BJ (cell line): ENCODE measurements at regions of chr18 and their contacts with region 1.

Region 1: DNA sequence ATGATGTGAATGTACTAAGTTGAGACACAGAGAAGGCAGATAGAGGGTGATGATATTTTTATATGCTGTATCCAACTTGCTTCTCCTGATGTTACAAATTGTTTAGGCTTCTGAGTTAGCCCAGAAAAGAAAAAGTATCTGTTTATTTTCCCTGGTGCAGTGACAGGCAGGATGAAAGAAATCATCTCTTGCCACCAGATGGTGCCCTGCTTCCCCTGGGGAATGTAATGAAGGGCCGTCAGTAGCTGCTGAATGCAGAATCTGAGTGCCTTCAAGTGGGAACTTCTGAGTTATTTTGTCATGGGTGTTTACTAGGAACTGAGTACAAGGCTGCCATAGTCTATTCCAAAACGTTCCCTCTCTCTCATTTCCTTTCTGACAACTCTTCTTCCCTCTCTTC is 525.6 kb downstream of the MBD2 start:
- DNase-seq: no peak
- H3K4me3 ChIP-seq: no peak overlapping the region
- H3K27me3 ChIP-seq: no peaks in the 10 kb centered on the region
- CTCF ChIP-seq: peak; percentile 63

Region 2: DNA sequence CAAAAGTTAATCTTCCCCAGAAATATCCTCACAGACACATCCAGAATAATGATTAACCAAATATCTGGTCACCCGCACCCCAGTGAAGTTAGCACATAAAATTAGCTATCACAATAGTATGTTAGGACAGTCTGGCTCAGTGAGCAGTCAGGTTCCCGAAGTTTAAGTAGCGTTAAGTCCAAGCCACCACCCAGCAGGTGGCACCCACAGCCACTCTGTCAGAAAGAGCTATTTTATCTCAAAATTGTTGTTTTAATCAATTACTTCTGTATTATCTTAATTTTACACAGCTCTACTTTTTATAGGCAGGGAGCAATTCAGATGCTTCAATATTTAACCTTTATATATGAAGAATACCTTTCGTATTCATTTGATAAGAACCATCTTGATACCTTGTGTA is 11.9 kb before region 1 on chr18:
- CTCF ChIA-PET with region 1: no interaction called
- POLR2A ChIA-PET with region 1: no interaction called
- DNase-seq: no peak
- H3K4me3 ChIP-seq: no peak overlapping the region
- H3K27me3 ChIP-seq: no peaks in the 10 kb centered on the region
- CTCF ChIP-seq: no peak

Region 3: DNA sequence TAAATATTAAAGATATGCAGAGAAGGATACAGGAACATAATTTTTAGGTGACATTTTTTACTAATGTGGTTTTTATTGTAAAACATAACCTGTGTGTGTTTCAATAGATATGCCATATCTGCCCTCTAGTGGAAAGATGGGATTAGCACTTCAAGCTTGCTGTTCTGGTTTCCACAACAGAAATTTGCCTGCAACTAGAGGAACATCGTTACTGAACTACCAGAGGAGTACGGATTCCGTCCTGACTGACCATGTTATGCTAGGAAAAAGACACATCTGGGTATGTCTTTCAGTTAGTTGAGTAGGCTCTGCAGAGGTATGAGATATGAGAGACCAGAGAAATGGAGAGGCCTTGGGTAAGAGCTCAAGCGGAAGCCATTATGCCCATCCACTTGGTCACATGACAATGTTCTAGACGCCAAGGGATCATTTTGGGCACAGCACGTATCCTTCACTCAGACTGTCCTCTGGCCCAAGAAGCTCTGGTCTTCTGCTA is 420.7 kb after region 1 on chr18:
- CTCF ChIA-PET with region 1: interaction called, 13 read pairs
- POLR2A ChIA-PET with region 1: no interaction called
- DNase-seq: no peak
- H3K4me3 ChIP-seq: no peak overlapping the region
- H3K27me3 ChIP-seq: no peaks in the 10 kb centered on the region
- CTCF ChIP-seq: peak; percentile 81